Transverse colon (tissue), 4 donors: ENCODE measurements at regions of chr22 and their contacts with region 1.

Region 1: GRCh38 chr22:20721409-20722218 is 52.3 kb upstream of the SERPIND1 start:
- DNase-seq: no peak
- H3K4me3 ChIP-seq: no peak overlapping the region
- H3K27ac ChIP-seq: no peak overlapping the region
- H3K4me1 ChIP-seq: no peaks in the 10 kb centered on the region
- H3K27me3 ChIP-seq: no peaks in the 10 kb centered on the region
- CTCF ChIP-seq: no peak
- EP300 ChIP-seq: no peak
- POLR2A ChIP-seq: no peak

Region 2: DNA sequence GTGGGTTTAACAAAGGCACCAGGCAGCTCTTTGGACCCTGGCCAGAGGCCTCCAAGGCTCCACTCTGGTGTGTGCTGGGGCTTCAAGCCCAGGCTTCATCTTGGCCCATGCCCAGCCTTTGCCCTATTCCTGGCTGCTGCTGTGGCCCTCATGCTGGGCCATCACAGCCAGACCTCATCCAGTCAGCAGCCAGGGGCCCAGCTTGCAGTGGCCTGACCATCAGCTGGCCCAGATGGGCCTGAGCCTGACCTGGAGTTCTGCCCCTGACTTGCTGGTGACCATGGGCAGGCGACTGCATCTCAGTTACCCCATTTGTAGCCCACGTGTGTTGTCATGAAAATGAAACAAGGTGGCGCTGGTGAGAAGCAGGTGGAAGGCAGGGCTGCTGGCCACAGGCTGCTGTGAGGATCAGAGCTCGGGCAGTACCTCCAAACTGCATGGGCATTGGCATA is 138.1 kb before region 1 on chr22:
- in situ Hi-C with region 1: loop called in 1 of 4 experiments (anchors 25 kb)
- intact Hi-C with region 1: no loop called
- DNase-seq: no peak
- H3K4me3 ChIP-seq: no peak overlapping the region
- H3K27ac ChIP-seq: no peak overlapping the region
- H3K4me1 ChIP-seq: no peaks in the 10 kb centered on the region
- H3K27me3 ChIP-seq: no peaks in the 10 kb centered on the region
- CTCF ChIP-seq: no peak
- EP300 ChIP-seq: no peak
- POLR2A ChIP-seq: no peak

Region 3: GRCh38 chr22:21001560-21002325 is 280.1 kb after region 1 on chr22 and contains the start of gene THAP7:
- in situ Hi-C with region 1: no loop called
- intact Hi-C with region 1: loop called (anchors 5 kb)
- DNase-seq: peak; percentile 97
- H3K4me3 ChIP-seq: peak within 1 kb of the TSS; percentile 64 to 89 (median 76)
- H3K27ac ChIP-seq: peak within 1 kb of the TSS; percentile 93 to 99 (median 99)
- H3K4me1 ChIP-seq: peaks cover 23 to 36% (median 29%) of the 10 kb centered on the region in 4 donors
- H3K27me3 ChIP-seq: no peaks in the 10 kb centered on the region
- CTCF ChIP-seq: no peak
- EP300 ChIP-seq: peak; percentile 18
- POLR2A ChIP-seq: peak; percentile 94
- total RNA-seq, gene THAP7: 27.0 to 51.5 (median 32.7) TPM

Region 4: GRCh38 chr22:21014202-21014725 is 292.6 kb after region 1 on chr22:
- in situ Hi-C with region 1: no loop called
- intact Hi-C with region 1: no loop called
- DNase-seq: peak; percentile 89
- H3K4me3 ChIP-seq: peak overlapping the region; percentile 20 to 47 (median 33)
- H3K27ac ChIP-seq: peak overlapping the region; percentile 58 to 81 (median 72)
- H3K4me1 ChIP-seq: peaks cover 14 to 27% (median 20%) of the 10 kb centered on the region in 4 donors
- H3K27me3 ChIP-seq: no peaks in the 10 kb centered on the region
- CTCF ChIP-seq: no peak
- EP300 ChIP-seq: no peak
- POLR2A ChIP-seq: no peak